Activated naive CD4-positive, alpha-beta T cell treated with anti-CD3 and anti-CD28 coated beads, Interleukin-2, amount 10 ng/mL, durations not matched to agents 7 days and 5 days (primary cell): ENCODE measurements at regions of chr22 and their contacts with region 1.

Region 1: GRCh38 chr22:41746567-41747400 is 47.5 kb downstream of the MEI1 start:
- DNase-seq: peak; percentile 70
- H3K4me3 Mint-ChIP-seq: no peak overlapping the region
- H3K27ac Mint-ChIP-seq: no peak overlapping the region
- H3K4me1 Mint-ChIP-seq: peaks cover 2% of the 10 kb centered on the region
- H3K27me3 Mint-ChIP-seq: peaks cover 57% of the 10 kb centered on the region

Region 2: GRCh38 chr22:41768430-41768829 is 21.6 kb after region 1 on chr22:
- CTCF ChIA-PET with region 1: interaction called, 11 read pairs
- DNase-seq: no peak
- H3K4me3 Mint-ChIP-seq: no peak overlapping the region
- H3K27ac Mint-ChIP-seq: no peak overlapping the region
- H3K4me1 Mint-ChIP-seq: peaks cover 2% of the 10 kb centered on the region
- H3K27me3 Mint-ChIP-seq: peaks cover 9% of the 10 kb centered on the region

Region 3: DNA sequence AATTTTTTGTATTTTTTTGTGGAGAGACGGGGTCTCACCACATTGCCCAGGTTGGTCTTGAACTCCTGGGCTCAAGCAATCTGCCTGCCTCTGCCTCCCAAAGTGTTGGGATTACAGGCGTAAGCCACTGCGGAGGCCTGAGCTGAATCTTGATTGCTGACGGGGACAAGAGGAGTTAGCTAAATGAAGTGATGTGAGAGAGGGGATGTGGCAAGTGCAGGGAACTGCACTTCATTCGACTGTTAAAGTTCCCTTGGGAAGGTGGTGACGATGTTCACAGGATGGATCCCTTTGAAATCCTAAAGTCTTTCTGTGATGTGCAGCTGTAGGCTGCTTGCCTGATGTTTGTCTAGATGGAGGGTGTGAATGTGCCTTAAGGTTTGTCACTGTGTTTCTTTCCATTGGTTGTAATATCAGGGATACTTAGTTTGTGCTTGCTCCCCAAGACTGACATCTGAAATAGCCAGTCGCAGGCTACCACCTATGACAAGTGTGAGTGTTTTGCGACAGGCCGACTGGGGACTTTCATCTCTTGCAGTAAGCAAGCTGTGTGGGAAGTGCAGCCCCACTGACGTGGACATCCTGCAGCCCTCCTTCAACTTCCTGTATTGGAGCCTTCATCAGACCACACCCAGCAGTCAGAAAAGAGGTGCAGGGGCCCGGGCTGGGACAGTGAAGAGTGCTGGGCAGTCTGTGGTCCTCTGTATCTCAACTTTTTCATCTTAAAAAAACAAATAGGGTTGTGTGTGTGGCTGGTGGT is 34.1 kb after region 1 on chr22:
- CTCF ChIA-PET with region 1: interaction called, 21 read pairs
- DNase-seq: peak; percentile 98
- H3K4me3 Mint-ChIP-seq: peak overlapping the region; percentile 82
- H3K27ac Mint-ChIP-seq: peak overlapping the region; percentile 97
- H3K4me1 Mint-ChIP-seq: peaks cover 58% of the 10 kb centered on the region
- H3K27me3 Mint-ChIP-seq: peaks cover 6% of the 10 kb centered on the region

Region 4: GRCh38 chr22:41826430-41827383 is 79.9 kb after region 1 on chr22:
- CTCF ChIA-PET with region 1: no interaction called
- DNase-seq: no peak
- H3K4me3 Mint-ChIP-seq: no peak overlapping the region
- H3K27ac Mint-ChIP-seq: peak overlapping the region; percentile 15
- H3K4me1 Mint-ChIP-seq: peaks cover 16% of the 10 kb centered on the region
- H3K27me3 Mint-ChIP-seq: no peaks in the 10 kb centered on the region